ENCODE measurements at regions of chr20 and their contacts with region 1.

Region 1: DNA sequence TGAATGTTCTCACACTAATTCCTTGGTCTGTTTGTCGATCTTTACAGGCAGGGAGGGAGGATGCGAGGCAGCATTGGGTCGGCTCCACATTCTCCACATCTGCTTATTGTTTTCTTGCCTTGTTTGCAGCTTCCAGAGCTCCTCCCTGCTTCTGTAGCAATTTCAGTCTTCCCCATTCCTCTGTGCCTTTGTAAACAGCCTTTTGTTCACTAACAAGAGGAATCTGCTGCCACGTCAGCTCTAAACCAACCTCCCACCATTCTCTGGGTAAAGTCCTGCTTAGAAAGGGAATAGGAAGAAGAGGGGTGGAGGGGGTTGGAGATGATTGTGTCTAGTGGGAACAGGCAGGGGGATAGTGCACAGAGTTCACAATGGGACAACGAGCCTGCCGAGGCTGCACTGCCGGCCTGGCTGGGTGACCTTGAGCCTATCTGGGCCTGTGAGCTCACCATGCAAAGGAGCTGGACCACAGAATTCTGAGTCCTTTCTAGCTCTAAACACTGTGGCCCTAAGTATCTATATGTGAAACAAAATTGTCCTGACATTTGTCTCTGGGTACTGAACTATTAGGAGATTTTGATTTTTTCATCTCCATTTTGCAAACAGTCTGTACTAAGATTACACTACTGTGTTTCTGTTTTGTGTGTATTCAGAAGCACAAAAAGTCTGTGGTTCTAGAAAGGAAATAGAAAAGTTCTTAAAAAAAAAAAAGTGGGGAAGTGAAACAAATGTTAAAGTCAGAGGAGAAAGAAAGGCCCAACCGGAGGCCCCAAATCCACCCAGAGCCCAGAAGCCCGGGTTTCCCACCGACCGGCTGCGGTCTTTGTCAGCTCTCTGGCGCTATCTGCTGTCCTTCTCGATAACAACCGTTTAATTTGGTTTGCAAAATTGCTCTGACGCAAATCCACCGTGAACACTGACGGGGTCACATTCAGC is 1.4 kb upstream of the PRND start:
- DNase-seq: peak; percentile 94
- CTCF ChIP-seq: peak; percentile 74

Region 2: GRCh38 chr20:4613184-4613583 is 107.1 kb before region 1 on chr20:
- CTCF ChIA-PET with region 1: interaction called, 120 read pairs
- POLR2A ChIA-PET with region 1: no interaction called
- DNase-seq: no peak
- CTCF ChIP-seq: no peak